CD8-positive, alpha-beta memory T cell (primary cell): ENCODE measurements at regions of chr1 and their contacts with region 1.

Region 1: GRCh38 chr1:11645670-11646265 is 8.5 kb downstream of the FBXO2 start:
- DNase-seq: peak; percentile 63 to 84 (median 68)
- H3K4me3 ChIP-seq: no peak overlapping the region
- H3K4me3 Mint-ChIP-seq: no peak overlapping the region
- H3K27ac ChIP-seq: no peak overlapping the region
- H3K27ac Mint-ChIP-seq: peak overlapping the region in 1 of 8 donors; percentile 58
- H3K4me1 ChIP-seq: peaks cover 14% of the 10 kb centered on the region
- H3K4me1 Mint-ChIP-seq: peaks cover 11 to 20% (median 14%) of the 10 kb centered on the region in 3 donors
- H3K27me3 ChIP-seq: no peaks in the 10 kb centered on the region
- H3K27me3 Mint-ChIP-seq: peaks cover 0 to 2% of the 10 kb centered on the region in 2 donors

Region 2: GRCh38 chr1:11245904-11246719 is 399.7 kb before region 1 on chr1:
- CTCF ChIA-PET with region 1: interaction called, 52 read pairs
- POLR2A ChIA-PET with region 1: no interaction called
- DNase-seq: peak in 1 of 5 donors; percentile 57
- H3K4me3 ChIP-seq: no peak overlapping the region
- H3K4me3 Mint-ChIP-seq: peak overlapping the region in 5 of 7 donors; percentile 18 to 79 (median 38)
- H3K27ac ChIP-seq: peak overlapping the region; percentile 3
- H3K27ac Mint-ChIP-seq: peak overlapping the region; percentile 77 to 100 (median 94)
- H3K4me1 ChIP-seq: no peaks in the 10 kb centered on the region
- H3K4me1 Mint-ChIP-seq: peaks cover 29 to 37% (median 33%) of the 10 kb centered on the region in 3 donors
- H3K27me3 ChIP-seq: no peaks in the 10 kb centered on the region
- H3K27me3 Mint-ChIP-seq: no peaks in the 10 kb centered on the region

Region 3: GRCh38 chr1:11335417-11336056 is 310.2 kb before region 1 on chr1:
- CTCF ChIA-PET with region 1: interaction called, 10 read pairs
- POLR2A ChIA-PET with region 1: no interaction called
- DNase-seq: peak in 1 of 5 donors; percentile 4
- H3K4me3 ChIP-seq: no peak overlapping the region
- H3K4me3 Mint-ChIP-seq: no peak overlapping the region
- H3K27ac ChIP-seq: no peak overlapping the region
- H3K27ac Mint-ChIP-seq: peak overlapping the region in 2 of 8 donors; percentile 26 to 92
- H3K4me1 ChIP-seq: peaks cover 8% of the 10 kb centered on the region
- H3K4me1 Mint-ChIP-seq: peaks cover 0 to 3% (median 2%) of the 10 kb centered on the region in 3 donors
- H3K27me3 ChIP-seq: no peaks in the 10 kb centered on the region
- H3K27me3 Mint-ChIP-seq: peaks cover 12 to 29% of the 10 kb centered on the region in 2 donors

Region 4: DNA sequence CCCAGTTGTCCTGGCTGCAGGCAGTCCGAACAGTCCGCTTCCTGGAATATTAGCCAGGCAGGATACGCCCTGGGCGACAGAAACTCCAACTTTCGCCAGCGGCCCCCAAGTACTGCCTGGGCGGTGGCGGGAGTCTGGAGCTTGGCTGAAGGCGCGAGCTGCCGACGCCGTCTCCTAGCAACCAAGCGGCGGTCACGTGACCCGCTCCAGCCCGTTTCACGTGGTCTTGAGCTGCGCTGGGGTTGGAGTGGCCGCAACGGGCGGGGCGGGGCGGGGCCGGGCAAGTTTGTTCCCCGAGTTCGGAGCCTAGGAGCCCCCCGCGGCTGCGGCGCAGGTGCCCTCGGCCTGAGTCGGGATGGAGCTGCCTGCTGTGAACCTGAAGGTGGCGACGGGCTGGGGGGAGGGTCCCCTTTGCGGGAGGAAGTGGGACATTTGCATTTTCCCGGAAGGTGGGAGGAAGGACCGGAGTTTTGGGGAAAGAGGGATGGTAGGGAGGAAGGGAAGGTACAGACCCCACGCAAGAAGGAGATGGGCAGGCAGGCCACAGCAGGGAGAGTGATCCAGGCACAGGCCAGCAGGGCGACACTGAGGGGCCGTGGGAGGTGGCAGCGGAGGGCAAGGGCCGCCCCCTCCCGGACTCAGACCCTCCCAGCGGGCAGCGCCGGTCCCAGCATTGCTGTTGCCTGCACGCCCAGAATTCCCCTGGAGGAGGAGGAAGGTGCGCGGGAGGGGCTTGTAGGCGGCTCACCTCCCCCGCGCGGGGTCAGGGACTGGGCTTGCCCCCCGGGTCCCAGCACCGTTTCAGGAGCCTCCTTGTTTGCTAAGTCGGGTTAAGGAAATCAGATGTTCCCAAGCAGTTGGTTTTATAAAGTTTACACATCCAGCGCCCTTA is 90.3 kb after region 1 on chr1 and contains the start of gene AGTRAP:
- CTCF ChIA-PET with region 1: interaction called, 10 read pairs
- POLR2A ChIA-PET with region 1: interaction called, 3 read pairs
- DNase-seq: peak; percentile 73 to 90 (median 82)
- H3K4me3 ChIP-seq: peak within 1 kb of the TSS; percentile 95
- H3K4me3 Mint-ChIP-seq: peak within 1 kb of the TSS; percentile 90 to 99 (median 93)
- H3K27ac ChIP-seq: peak within 1 kb of the TSS; percentile 83
- H3K27ac Mint-ChIP-seq: peak within 1 kb of the TSS; percentile 68 to 97 (median 90)
- H3K4me1 ChIP-seq: peaks cover 64% of the 10 kb centered on the region
- H3K4me1 Mint-ChIP-seq: peaks cover 55 to 71% (median 59%) of the 10 kb centered on the region in 3 donors
- H3K27me3 ChIP-seq: no peaks in the 10 kb centered on the region
- H3K27me3 Mint-ChIP-seq: no peaks in the 10 kb centered on the region
- total RNA-seq, gene AGTRAP: 9.7 to 10.6 TPM

Region 5: DNA sequence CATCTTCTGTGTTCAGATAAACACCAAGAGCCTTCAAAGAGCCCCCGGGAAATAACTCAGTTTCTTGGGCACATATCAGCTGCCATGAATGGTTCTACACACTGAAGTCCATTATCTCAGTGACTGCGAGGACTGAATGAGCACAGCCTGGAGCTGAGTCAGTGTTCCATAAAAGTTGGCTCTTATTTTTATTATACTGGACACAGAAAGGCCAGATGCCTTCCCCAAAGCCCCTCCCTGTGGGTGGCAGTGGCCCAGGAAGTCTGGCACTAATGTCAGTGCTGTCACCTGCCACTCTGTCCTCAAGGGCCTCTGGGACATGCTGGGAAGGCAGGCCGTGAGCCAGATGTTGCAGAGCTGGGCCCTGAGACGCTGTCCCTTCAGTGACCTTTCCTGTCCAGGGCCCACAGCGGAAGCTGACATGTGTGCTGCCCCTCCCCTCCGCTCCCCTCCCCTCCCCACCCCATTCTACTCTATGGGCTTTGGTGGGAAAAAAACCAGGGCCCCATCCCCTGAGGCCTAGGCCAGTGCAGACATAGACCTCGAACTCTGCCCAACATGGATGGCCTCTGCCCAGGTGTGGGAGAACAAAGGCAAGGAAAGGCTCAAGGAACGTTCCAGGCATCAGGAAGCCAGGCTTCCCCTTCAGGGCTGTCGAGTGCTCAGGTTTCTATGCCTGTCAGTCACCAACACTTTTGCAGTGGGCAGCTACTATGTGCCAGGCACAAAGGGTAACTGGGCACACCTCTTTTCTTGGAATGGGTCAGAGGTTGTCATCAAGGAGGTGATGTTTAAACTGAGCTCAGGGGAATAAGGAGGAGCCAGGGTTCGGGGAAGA is 235.4 kb after region 1 on chr1:
- CTCF ChIA-PET with region 1: no interaction called
- POLR2A ChIA-PET with region 1: no interaction called
- DNase-seq: no peak
- H3K4me3 ChIP-seq: no peak overlapping the region
- H3K4me3 Mint-ChIP-seq: no peak overlapping the region
- H3K27ac ChIP-seq: peak overlapping the region; percentile 31
- H3K27ac Mint-ChIP-seq: peak overlapping the region in 1 of 8 donors; percentile 29
- H3K4me1 ChIP-seq: no peaks in the 10 kb centered on the region
- H3K4me1 Mint-ChIP-seq: no peaks in the 10 kb centered on the region
- H3K27me3 ChIP-seq: no peaks in the 10 kb centered on the region
- H3K27me3 Mint-ChIP-seq: peaks cover 18 to 42% of the 10 kb centered on the region in 2 donors